ENCODE measurements at regions of chr20 and their contacts with region 1.

Region 1: DNA sequence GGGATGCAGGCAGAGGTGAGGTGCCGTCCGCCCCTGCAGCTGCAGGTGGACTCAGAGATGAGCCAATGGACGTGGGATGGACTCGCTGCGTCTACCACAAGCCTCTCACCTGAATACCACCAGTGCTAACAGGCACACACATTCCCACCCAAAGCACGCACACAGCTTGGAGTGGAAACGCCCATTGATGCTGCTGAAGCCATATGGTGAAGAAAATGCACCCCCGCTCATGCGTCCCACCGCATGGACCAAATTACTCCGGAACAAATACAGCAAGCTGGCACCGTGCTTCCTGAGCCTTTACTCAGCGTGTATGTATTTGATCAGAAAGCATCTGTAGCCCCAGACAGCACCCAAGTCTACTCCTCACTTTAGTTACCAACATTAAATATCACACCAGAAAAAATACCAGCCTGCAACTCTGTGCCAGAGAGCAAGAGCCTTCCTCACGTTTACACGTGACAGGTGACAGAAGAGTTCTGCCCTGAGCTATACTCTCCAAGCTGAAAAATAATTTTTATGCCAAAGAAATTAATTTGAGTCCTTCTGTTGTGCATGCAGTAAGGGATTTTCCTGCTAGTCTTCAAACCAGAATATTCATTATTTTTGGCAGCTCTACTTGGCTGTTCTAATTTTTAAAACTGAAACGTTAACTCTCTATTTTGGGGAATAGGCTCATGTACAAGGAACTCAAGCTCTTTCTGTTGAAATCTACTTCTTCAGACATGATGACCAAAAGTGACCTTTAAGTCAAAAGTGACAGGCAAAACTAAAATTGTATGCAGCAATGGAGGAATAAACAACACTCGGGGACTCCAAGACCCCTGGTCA is 58.2 kb upstream of the SYNDIG1 start:
- H3K4me3 Mint-ChIP-seq: no peak overlapping the region
- H3K27ac Mint-ChIP-seq: no peak overlapping the region
- H3K4me1 Mint-ChIP-seq: peaks cover 5% of the 10 kb centered on the region
- H3K27me3 Mint-ChIP-seq: no peaks in the 10 kb centered on the region

Region 2: GRCh38 chr20:24350923-24351368 is 60.3 kb before region 1 on chr20:
- intact Hi-C with region 1: loop called (anchors 10 kb)
- H3K4me3 Mint-ChIP-seq: no peak overlapping the region
- H3K27ac Mint-ChIP-seq: no peak overlapping the region
- H3K4me1 Mint-ChIP-seq: no peaks in the 10 kb centered on the region
- H3K27me3 Mint-ChIP-seq: no peaks in the 10 kb centered on the region